T-cell (primary cell): ENCODE measurements at regions of chr10 and their contacts with region 1.

Region 1: DNA sequence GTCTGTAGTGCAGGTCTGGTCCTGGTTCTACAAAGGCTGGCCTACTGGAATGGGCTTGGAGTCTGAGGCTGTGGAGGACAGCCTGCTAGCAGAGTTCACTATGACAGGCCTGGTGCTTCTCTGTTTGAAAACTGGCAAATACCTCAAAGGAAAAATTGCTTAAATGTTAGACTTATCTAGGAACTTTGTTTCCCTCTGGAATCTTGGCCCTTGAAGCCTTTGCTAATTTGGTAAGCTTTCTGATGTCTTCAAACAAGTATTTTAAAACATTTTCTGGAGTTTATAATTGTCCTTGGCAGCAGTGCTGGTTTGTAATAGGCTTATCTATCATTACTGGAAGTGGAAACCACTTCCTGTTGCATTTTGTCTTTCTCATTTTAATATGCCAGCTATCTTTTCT is 139.7 kb downstream of the TMEM26 start:
- DNase-seq: no peak
- ATAC-seq: no peak
- H3K4me3 ChIP-seq: no peak overlapping the region
- H3K4me3 Mint-ChIP-seq: peak overlapping the region in 1 of 3 donors; percentile 3
- H3K27ac ChIP-seq: no peak overlapping the region
- H3K27ac Mint-ChIP-seq: peak overlapping the region; percentile 36 to 48
- H3K4me1 ChIP-seq: peaks cover 3 to 9% of the 10 kb centered on the region in 2 experiments
- H3K4me1 Mint-ChIP-seq: peaks cover 16 to 19% (median 18%) of the 10 kb centered on the region in 3 donors
- H3K27me3 ChIP-seq: no peaks in the 10 kb centered on the region
- H3K27me3 Mint-ChIP-seq: no peaks in the 10 kb centered on the region

Region 2: DNA sequence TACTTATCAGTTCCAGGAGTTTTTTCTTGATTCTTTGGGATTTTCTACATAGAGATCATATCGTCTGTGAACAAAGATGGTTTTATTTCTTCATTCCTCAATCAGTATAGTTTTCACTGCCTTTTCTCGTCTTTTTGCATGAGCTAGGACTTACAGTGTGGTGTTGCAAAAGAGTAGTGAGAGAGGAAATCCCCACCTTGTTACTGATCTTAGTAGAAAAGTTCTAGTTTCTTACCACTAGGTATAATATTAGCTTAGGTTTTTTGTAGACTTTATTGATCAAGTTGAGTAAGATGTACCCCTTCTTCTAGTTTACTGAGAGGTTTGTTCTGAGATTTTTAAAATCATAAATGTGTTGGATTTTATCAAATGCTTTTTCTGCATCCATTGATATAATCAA is 16.4 kb after region 1 on chr10:
- CTCF ChIA-PET with region 1: no interaction called
- POLR2A ChIA-PET with region 1: no interaction called
- DNase-seq: no peak
- ATAC-seq: no peak
- H3K4me3 ChIP-seq: no peak overlapping the region
- H3K4me3 Mint-ChIP-seq: no peak overlapping the region
- H3K27ac ChIP-seq: no peak overlapping the region
- H3K27ac Mint-ChIP-seq: no peak overlapping the region
- H3K4me1 ChIP-seq: no peaks in the 10 kb centered on the region
- H3K4me1 Mint-ChIP-seq: no peaks in the 10 kb centered on the region
- H3K27me3 ChIP-seq: peaks cover 0 to 2% of the 10 kb centered on the region in 2 experiments
- H3K27me3 Mint-ChIP-seq: peaks cover 0 to 16% of the 10 kb centered on the region in 2 donors

Region 3: DNA sequence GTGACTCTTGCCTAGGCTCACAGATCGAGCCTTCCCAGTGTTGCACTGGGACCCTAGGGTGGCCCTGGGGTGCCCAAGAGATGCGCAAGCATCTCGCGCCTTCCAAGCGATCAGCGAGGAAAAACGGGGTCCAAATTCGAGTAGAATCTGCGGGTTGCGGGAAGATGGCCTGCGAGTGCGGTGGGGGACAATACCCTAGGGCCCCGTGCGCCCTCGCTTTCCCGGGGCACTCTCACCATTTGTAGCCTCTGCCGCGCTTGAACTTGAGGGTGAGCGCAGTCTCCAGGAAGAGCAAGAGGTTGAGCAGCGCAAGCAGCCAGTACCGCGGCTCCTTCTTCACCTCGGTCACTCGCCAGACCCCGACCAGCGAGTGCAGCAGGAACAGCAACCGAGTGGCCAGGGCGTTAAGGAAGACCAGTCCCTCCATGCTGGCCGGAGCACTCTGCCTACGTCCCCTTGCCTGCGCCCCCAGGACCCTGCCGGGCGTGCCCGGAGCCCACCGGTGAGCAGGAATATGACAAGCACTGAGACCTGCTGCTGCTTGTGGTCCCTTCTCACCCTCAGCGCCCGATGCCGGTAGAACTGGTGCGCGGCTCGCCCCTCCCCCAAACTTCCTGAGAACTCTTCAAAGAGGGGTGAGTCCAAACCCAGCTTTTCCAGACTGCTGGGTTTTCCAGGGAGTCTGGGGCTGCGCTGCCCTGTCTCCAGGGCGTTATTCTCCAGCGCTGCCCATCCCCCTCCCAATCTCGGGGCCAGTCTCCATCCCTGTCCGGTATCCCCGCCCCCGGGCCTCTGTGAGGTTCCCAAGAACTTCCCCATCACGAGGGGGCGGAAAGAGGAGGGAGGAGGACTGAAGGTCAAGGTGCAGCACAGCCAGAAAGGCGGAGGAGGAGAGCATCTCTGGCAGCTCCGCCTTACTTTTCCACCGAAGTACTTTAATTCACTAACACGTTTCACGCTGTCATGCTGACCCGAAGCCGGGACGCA is 139.5 kb after region 1 on chr10 and contains the start of gene TMEM26:
- CTCF ChIA-PET with region 1: no interaction called
- POLR2A ChIA-PET with region 1: no interaction called
- DNase-seq: no peak
- ATAC-seq: no peak
- H3K4me3 ChIP-seq: peak within 1 kb of the TSS in 1 of 2 donors; percentile 94
- H3K4me3 Mint-ChIP-seq: peak within 1 kb of the TSS in 2 of 3 donors; percentile 25 to 45
- H3K27ac ChIP-seq: no peak within 1 kb of the TSS
- H3K27ac Mint-ChIP-seq: no peak within 1 kb of the TSS
- H3K4me1 ChIP-seq: peaks cover 7 to 16% of the 10 kb centered on the region in 2 experiments
- H3K4me1 Mint-ChIP-seq: peaks cover 8 to 17% (median 8%) of the 10 kb centered on the region in 3 donors
- H3K27me3 ChIP-seq: peaks cover 0 to 18% of the 10 kb centered on the region in 2 experiments
- H3K27me3 Mint-ChIP-seq: peaks cover 39 to 41% of the 10 kb centered on the region in 2 donors
- total RNA-seq, gene TMEM26: not detected

Region 4: GRCh38 chr10:62266147-62266546 is 952.7 kb after region 1 on chr10:
- CTCF ChIA-PET with region 1: interaction called in 1 of 2 experiments, 10 read pairs
- POLR2A ChIA-PET with region 1: no interaction called
- DNase-seq: no peak
- ATAC-seq: no peak
- H3K4me3 ChIP-seq: no peak overlapping the region
- H3K4me3 Mint-ChIP-seq: no peak overlapping the region
- H3K27ac ChIP-seq: no peak overlapping the region
- H3K27ac Mint-ChIP-seq: no peak overlapping the region
- H3K4me1 ChIP-seq: peaks cover 3 to 13% of the 10 kb centered on the region in 2 experiments
- H3K4me1 Mint-ChIP-seq: peaks cover 11 to 19% (median 13%) of the 10 kb centered on the region in 3 donors
- H3K27me3 ChIP-seq: peaks cover 0 to 11% of the 10 kb centered on the region in 2 experiments
- H3K27me3 Mint-ChIP-seq: peaks cover 3 to 13% of the 10 kb centered on the region in 2 donors